CD8-positive, alpha-beta T cell (primary cell): ENCODE measurements at regions of chr6 and their contacts with region 1.

Region 1: DNA sequence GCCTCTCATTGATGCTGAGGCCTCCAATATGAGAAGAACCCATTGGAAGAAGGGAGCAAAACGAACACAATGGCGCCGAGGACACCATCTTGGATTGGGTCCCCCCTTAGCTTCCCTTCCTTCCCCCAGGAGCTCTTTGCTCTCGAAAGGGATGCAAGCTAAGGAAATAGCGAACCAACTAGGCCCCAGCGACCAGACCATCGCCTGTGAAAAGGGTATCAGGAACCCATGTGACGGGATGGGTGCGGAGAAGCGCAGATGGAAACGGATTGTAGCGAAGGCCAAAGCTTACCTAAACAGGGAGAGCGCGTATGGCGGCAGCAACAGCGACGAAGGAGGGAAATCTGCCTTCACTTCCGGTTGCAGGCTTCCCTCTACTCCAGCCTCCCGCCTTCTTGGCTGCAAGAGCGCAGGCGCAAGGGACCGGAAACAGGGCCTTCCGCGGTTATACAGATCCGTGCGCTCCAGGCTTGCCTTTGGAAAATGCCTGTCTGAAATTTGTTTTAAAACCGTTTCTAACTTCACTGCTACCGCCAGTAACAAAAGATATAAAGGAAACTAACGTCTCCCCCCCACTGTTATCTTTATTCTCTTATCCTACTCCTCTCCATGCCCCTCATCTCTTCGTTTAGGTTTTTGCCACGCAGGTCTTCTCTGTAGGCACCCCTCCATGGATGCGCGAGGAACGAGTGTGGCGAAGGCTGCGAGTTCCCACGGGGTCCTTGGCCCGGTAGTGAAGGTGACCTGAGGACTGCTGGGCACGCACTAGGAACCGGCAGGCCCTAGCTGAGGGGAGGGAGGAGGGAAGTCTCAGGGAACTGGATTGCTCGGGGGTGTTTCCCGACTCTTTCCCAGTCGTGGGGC is at the start of gene DDX39B:
- DNase-seq: peak; percentile 85 to 98 (median 93)
- ATAC-seq: peak; percentile 67
- H3K4me3 ChIP-seq: peak within 1 kb of the TSS; percentile 76 to 86
- H3K4me3 Mint-ChIP-seq: peak within 1 kb of the TSS; percentile 98
- H3K27ac ChIP-seq: peak within 1 kb of the TSS; percentile 95 to 96
- H3K27ac Mint-ChIP-seq: peak within 1 kb of the TSS; percentile 100
- H3K4me1 ChIP-seq: peaks cover 37% of the 10 kb centered on the region
- H3K4me1 Mint-ChIP-seq: peaks cover 56% of the 10 kb centered on the region
- H3K27me3 ChIP-seq: no peaks in the 10 kb centered on the region
- H3K27me3 Mint-ChIP-seq: no peaks in the 10 kb centered on the region
- CTCF ChIP-seq: no peak
- total RNA-seq, gene DDX39B: 483 to 518 TPM

Region 2: DNA sequence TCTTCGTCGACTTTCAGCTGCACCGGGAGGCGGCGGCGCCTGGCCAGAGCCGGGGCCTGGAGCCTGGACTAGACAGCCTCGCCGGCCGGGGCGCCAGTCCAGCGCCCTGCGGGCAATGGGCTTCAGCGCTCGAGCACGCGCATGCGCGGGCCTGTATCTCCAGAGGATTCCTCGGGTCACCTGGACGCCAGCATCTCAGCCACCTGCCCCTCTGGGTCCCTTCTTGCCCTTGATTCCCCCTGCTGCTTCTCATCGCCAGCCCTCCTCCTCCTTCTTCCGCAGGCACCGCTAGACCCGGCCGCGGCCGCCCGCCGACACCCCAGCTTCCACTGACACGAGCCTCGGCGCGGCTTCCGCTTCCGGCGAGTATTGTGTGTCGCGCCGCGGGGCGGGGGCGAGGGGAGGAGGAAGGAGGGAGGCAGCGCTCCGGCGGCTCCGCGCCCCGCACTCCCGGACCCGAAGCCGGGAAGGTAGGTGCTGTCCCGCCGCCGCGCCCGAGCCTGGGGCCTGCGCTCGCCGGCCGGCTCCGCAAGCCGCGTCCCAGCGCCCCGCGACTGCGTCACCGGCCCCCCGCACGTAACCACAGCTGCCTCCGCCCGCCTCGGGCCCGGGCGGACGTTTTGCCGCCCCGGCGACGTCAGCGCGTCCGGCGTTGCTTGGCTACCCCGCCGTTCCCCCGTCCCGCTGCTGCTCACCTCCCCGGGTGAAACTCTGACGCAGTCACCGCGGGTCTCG is 1215.2 kb before region 1 on chr6 and contains the start of gene TRIM39:
- CTCF ChIA-PET with region 1: no interaction called
- POLR2A ChIA-PET with region 1: no interaction called
- intact Hi-C with region 1: loop called in 1 of 2 experiments (anchors 10 kb)
- DNase-seq: peak; percentile 75 to 97 (median 90)
- ATAC-seq: peak; percentile 58
- H3K4me3 ChIP-seq: peak within 1 kb of the TSS; percentile 74 to 87
- H3K4me3 Mint-ChIP-seq: peak within 1 kb of the TSS; percentile 96
- H3K27ac ChIP-seq: peak within 1 kb of the TSS; percentile 95 to 99
- H3K27ac Mint-ChIP-seq: peak within 1 kb of the TSS; percentile 98
- H3K4me1 ChIP-seq: peaks cover 41% of the 10 kb centered on the region
- H3K4me1 Mint-ChIP-seq: peaks cover 59% of the 10 kb centered on the region
- H3K27me3 ChIP-seq: no peaks in the 10 kb centered on the region
- H3K27me3 Mint-ChIP-seq: no peaks in the 10 kb centered on the region
- CTCF ChIP-seq: no peak
- total RNA-seq, gene TRIM39: 50.7 to 58.5 TPM

Region 3: DNA sequence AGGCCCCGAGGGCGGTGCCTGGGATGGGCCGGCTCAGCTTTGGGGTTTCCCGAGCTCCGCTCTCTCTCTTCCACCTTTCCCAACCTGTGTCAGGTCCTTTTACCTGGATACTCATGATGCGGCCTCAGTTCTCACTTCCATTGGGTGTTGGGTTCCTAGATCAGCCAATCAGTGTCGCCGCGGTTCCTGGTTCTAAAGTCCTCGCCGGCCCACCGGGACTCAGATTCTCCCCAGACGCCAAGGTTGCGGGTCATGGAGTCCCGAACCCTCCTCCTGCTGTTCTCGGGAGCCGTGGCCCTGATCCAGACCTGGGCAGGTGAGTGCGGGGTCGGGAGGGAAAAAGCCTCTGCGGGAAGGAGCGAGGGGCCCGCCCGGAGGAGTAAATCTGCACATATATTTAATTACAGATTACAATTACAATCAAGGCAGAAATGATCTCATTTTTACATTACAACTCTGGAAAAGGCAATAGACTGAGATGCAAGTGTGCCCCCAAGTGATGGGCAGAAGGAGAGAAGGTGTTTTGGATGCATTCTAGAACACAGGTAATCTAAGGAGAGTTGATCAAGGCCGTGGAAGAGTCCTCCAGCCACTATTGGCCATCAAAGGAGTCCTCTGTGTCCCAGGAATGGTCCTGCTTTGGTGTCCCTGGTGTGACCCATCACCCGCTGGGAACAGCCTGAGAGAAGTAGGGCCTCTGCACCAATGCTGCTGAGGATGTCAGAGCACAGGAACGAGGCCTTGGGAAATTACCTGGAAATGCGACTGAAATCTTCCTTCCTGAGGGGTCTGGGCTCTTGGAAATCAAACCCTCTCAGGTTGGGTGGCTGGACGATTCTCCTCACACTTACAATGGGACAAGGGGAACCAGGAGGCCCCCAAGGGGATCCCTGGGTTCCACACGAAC is 78.7 kb before region 1 on chr6:
- CTCF ChIA-PET with region 1: interaction called, 5 read pairs
- POLR2A ChIA-PET with region 1: no interaction called
- intact Hi-C with region 1: loop called in 1 of 2 experiments (anchors 2 kb)
- DNase-seq: peak; percentile 81 to 98 (median 90)
- ATAC-seq: peak; percentile 93
- H3K4me3 ChIP-seq: peak overlapping the region; percentile 80 to 82
- H3K4me3 Mint-ChIP-seq: peak overlapping the region; percentile 100
- H3K27ac ChIP-seq: peak overlapping the region; percentile 89 to 98
- H3K27ac Mint-ChIP-seq: peak overlapping the region; percentile 98
- H3K4me1 ChIP-seq: peaks cover 48% of the 10 kb centered on the region
- H3K4me1 Mint-ChIP-seq: peaks cover 67% of the 10 kb centered on the region
- H3K27me3 ChIP-seq: no peaks in the 10 kb centered on the region
- H3K27me3 Mint-ChIP-seq: no peaks in the 10 kb centered on the region
- CTCF ChIP-seq: no peak

Region 4: GRCh38 chr6:31580807-31581433 is 39.0 kb after region 1 on chr6:
- CTCF ChIA-PET with region 1: interaction called, 448 read pairs
- POLR2A ChIA-PET with region 1: interaction called, 29 read pairs
- intact Hi-C with region 1: loop called (anchors 1 kb)
- DNase-seq: peak; percentile 81 to 97 (median 90)
- ATAC-seq: peak; percentile 73
- H3K4me3 ChIP-seq: peak overlapping the region; percentile 92 to 100
- H3K4me3 Mint-ChIP-seq: peak overlapping the region; percentile 99
- H3K27ac ChIP-seq: peak overlapping the region; percentile 77 to 91
- H3K27ac Mint-ChIP-seq: peak overlapping the region; percentile 96
- H3K4me1 ChIP-seq: peaks cover 69% of the 10 kb centered on the region
- H3K4me1 Mint-ChIP-seq: peaks cover 77% of the 10 kb centered on the region
- H3K27me3 ChIP-seq: no peaks in the 10 kb centered on the region
- H3K27me3 Mint-ChIP-seq: no peaks in the 10 kb centered on the region
- CTCF ChIP-seq: peak; percentile 98

Region 5: GRCh38 chr6:31652925-31653718 is 111.2 kb after region 1 on chr6:
- CTCF ChIA-PET with region 1: no interaction called
- POLR2A ChIA-PET with region 1: interaction called, 8 read pairs
- intact Hi-C with region 1: loop called (anchors 1 kb)
- DNase-seq: peak in 4 of 9 experiments; percentile 77 to 92 (median 88)
- ATAC-seq: peak; percentile 70
- H3K4me3 ChIP-seq: peak overlapping the region; percentile 78 to 82
- H3K4me3 Mint-ChIP-seq: peak overlapping the region; percentile 92
- H3K27ac ChIP-seq: peak overlapping the region; percentile 94 to 96
- H3K27ac Mint-ChIP-seq: peak overlapping the region; percentile 100
- H3K4me1 ChIP-seq: peaks cover 32% of the 10 kb centered on the region
- H3K4me1 Mint-ChIP-seq: peaks cover 59% of the 10 kb centered on the region
- H3K27me3 ChIP-seq: no peaks in the 10 kb centered on the region
- H3K27me3 Mint-ChIP-seq: no peaks in the 10 kb centered on the region
- CTCF ChIP-seq: no peak

Region 6: DNA sequence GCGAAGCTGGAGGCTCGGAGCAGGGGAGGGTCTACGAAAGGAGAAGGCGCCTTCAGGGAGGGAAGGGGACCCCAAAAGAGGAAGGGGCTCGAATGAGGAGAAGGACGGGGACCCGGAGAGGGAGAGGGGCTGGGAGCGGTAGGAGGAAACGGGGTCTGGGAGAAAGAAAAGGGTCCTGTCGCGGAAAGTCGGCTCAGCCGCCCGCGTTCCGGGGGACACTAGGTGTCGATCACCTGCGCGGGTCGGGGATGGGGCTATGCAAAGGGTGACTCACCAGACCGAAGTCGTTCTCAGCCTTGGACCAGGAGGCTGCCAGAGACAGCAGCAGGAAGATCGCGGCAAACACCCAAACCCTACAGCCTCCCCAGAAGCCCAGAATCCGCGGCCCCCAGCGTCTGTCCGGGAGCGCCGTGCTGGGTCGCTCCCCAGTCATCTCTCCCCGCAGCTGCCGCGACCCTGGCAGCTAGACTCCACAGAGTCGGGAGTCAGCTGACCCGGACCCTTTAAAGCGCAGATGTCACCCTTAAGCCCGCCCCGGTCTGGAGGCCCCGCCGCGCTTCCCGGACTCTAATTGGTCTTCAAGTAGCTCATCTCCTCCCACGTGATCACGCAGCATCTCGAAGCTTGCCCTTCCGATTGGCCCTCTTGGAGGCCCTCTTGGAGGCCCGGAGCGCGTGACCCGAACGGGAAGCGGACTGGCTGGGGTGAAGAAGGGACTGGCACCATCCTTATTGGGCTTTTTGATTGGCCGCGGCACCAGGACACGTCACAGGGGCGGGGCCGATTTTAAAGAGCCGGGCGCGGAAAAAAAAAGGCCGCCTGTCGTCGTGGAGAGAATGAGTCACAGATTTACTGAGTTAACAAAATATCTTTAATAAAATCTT is 320.7 kb after region 1 on chr6 and contains the start of gene NEU1:
- CTCF ChIA-PET with region 1: no interaction called
- POLR2A ChIA-PET with region 1: interaction called, 3 read pairs
- intact Hi-C with region 1: loop called in 1 of 2 experiments (anchors 10 kb)
- DNase-seq: peak; percentile 97 to 100 (median 98)
- ATAC-seq: peak; percentile 91
- H3K4me3 ChIP-seq: peak within 1 kb of the TSS; percentile 75 to 94
- H3K4me3 Mint-ChIP-seq: peak within 1 kb of the TSS; percentile 95
- H3K27ac ChIP-seq: peak within 1 kb of the TSS; percentile 77 to 97
- H3K27ac Mint-ChIP-seq: peak within 1 kb of the TSS; percentile 98
- H3K4me1 ChIP-seq: peaks cover 17% of the 10 kb centered on the region
- H3K4me1 Mint-ChIP-seq: peaks cover 23% of the 10 kb centered on the region
- H3K27me3 ChIP-seq: no peaks in the 10 kb centered on the region
- H3K27me3 Mint-ChIP-seq: no peaks in the 10 kb centered on the region
- CTCF ChIP-seq: no peak
- total RNA-seq, gene NEU1: 30.0 to 30.2 TPM